PC-9 (cell line): ENCODE measurements at regions of chr12 and their contacts with region 1.

Region 1: GRCh38 chr12:27014085-27014858 is at the start of gene TM7SF3:
- DNase-seq: peak; percentile 83 to 98
- H3K4me3 ChIP-seq: peak within 1 kb of the TSS; percentile 97
- H3K27ac ChIP-seq: peak within 1 kb of the TSS; percentile 48
- H3K4me1 ChIP-seq: peaks cover 35% of the 10 kb centered on the region
- H3K27me3 ChIP-seq: no peaks in the 10 kb centered on the region
- CTCF ChIP-seq: peak; percentile 82
- total RNA-seq, gene TM7SF3: 57.0 and 67.7 TPM in 2 replicates

Region 2: GRCh38 chr12:26113853-26114719 is 900.2 kb before region 1 on chr12:
- CTCF ChIA-PET with region 1: no interaction called
- POLR2A ChIA-PET with region 1: no interaction called
- intact Hi-C with region 1: loop called (anchors 10 kb)
- DNase-seq: peak; percentile 91 to 92
- H3K4me3 ChIP-seq: peak overlapping the region; percentile 57
- H3K27ac ChIP-seq: peak overlapping the region; percentile 93
- H3K4me1 ChIP-seq: peaks cover 61% of the 10 kb centered on the region
- H3K27me3 ChIP-seq: no peaks in the 10 kb centered on the region
- CTCF ChIP-seq: peak; percentile 46

Region 3: GRCh38 chr12:26608706-26609105 is 405.6 kb before region 1 on chr12:
- CTCF ChIA-PET with region 1: no interaction called
- POLR2A ChIA-PET with region 1: no interaction called
- intact Hi-C with region 1: no loop called
- DNase-seq: no peak
- H3K4me3 ChIP-seq: no peak overlapping the region
- H3K27ac ChIP-seq: no peak overlapping the region
- H3K4me1 ChIP-seq: no peaks in the 10 kb centered on the region
- H3K27me3 ChIP-seq: no peaks in the 10 kb centered on the region
- CTCF ChIP-seq: no peak

Region 4: GRCh38 chr12:26701604-26702215 is 312.6 kb before region 1 on chr12:
- CTCF ChIA-PET with region 1: no interaction called
- POLR2A ChIA-PET with region 1: interaction called, 7 read pairs
- intact Hi-C with region 1: loop called (anchors 5 kb)
- DNase-seq: peak in 1 of 2 experiments; percentile 40
- H3K4me3 ChIP-seq: no peak overlapping the region
- H3K27ac ChIP-seq: no peak overlapping the region
- H3K4me1 ChIP-seq: peaks cover 7% of the 10 kb centered on the region; the same call in 1 of the 2 replicates
- H3K27me3 ChIP-seq: no peaks in the 10 kb centered on the region
- CTCF ChIP-seq: peak; percentile 78

Region 5: GRCh38 chr12:26853303-26854030 is 160.8 kb before region 1 on chr12:
- CTCF ChIA-PET with region 1: no interaction called
- POLR2A ChIA-PET with region 1: interaction called, 9 read pairs
- intact Hi-C with region 1: loop called (anchors 1 kb)
- DNase-seq: peak in 1 of 2 experiments; percentile 71
- H3K4me3 ChIP-seq: no peak overlapping the region
- H3K27ac ChIP-seq: no peak overlapping the region
- H3K4me1 ChIP-seq: peaks cover 5% of the 10 kb centered on the region
- H3K27me3 ChIP-seq: no peaks in the 10 kb centered on the region
- CTCF ChIP-seq: peak; percentile 83

Region 6: GRCh38 chr12:26963413-26963812 is 50.9 kb before region 1 on chr12:
- CTCF ChIA-PET with region 1: no interaction called
- POLR2A ChIA-PET with region 1: no interaction called
- intact Hi-C with region 1: no loop called
- DNase-seq: no peak
- H3K4me3 ChIP-seq: no peak overlapping the region
- H3K27ac ChIP-seq: no peak overlapping the region
- H3K4me1 ChIP-seq: no peaks in the 10 kb centered on the region
- H3K27me3 ChIP-seq: no peaks in the 10 kb centered on the region
- CTCF ChIP-seq: no peak

Region 7: DNA sequence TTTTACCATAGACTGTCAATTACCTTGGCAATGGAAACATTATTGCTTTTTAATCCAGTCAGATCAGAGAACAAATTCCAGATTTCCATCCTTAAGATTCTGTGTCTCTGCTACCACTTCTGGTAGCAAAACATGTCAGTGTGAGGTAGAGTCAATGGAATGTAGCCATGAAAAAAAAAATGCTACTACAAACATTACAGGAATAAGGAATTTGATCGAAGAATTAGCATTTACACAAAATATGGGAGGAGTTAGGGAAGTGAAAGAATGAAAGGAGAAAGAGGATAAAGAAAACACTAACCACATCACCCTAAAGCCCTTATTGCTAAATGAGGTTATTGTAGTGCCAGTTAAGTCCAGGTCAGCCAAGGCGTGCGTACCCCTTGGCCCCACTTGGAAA is 17.3 kb after region 1 on chr12:
- CTCF ChIA-PET with region 1: no interaction called
- POLR2A ChIA-PET with region 1: no interaction called
- intact Hi-C with region 1: no loop called
- DNase-seq: no peak
- H3K4me3 ChIP-seq: no peak overlapping the region
- H3K27ac ChIP-seq: no peak overlapping the region
- H3K4me1 ChIP-seq: no peaks in the 10 kb centered on the region
- H3K27me3 ChIP-seq: no peaks in the 10 kb centered on the region
- CTCF ChIP-seq: no peak

Region 8: DNA sequence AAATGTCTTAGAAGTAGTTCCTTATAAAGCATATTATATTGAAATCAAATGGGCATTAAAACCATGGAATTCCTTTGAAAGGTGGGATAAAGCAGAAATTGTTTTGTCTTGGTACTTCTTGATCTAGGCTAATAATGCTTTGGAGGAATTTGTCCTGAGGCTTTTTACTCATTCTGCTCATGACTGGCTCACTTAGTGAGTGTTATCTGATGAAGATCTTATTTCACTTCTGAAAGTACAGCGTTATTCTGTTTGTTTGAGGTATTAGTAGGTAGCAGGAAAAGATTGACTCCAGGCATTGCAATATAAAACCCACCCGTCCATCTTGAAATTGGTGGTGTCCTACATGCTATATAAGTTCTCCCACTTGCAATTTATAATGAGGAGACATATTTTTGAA is 62.7 kb after region 1 on chr12:
- CTCF ChIA-PET with region 1: no interaction called
- POLR2A ChIA-PET with region 1: interaction called, 3 read pairs
- intact Hi-C with region 1: loop called (anchors 2 kb)
- DNase-seq: peak; percentile 12 to 90
- H3K4me3 ChIP-seq: 0 out of 2 replicates have a peak overlapping the region, but pooled peaks have one; percentile 10
- H3K27ac ChIP-seq: peak overlapping the region; percentile 14; the same call in 1 of the 2 replicates
- H3K4me1 ChIP-seq: peaks cover 24% of the 10 kb centered on the region
- H3K27me3 ChIP-seq: no peaks in the 10 kb centered on the region
- CTCF ChIP-seq: no peak

Region 9: GRCh38 chr12:27142101-27142721 is 127.9 kb after region 1 on chr12:
- CTCF ChIA-PET with region 1: no interaction called
- POLR2A ChIA-PET with region 1: no interaction called
- intact Hi-C with region 1: loop called (anchors 1 kb)
- DNase-seq: peak; percentile 44 to 64
- H3K4me3 ChIP-seq: no peak overlapping the region
- H3K27ac ChIP-seq: no peak overlapping the region
- H3K4me1 ChIP-seq: no peaks in the 10 kb centered on the region
- H3K27me3 ChIP-seq: no peaks in the 10 kb centered on the region
- CTCF ChIP-seq: peak; percentile 89

Region 10: GRCh38 chr12:27305673-27306456 is 291.6 kb after region 1 on chr12:
- CTCF ChIA-PET with region 1: interaction called, 19 read pairs
- POLR2A ChIA-PET with region 1: interaction called, 3 read pairs
- intact Hi-C with region 1: loop called (anchors 2 kb)
- DNase-seq: peak in 1 of 2 experiments; percentile 59
- H3K4me3 ChIP-seq: no peak overlapping the region
- H3K27ac ChIP-seq: no peak overlapping the region
- H3K4me1 ChIP-seq: no peaks in the 10 kb centered on the region
- H3K27me3 ChIP-seq: no peaks in the 10 kb centered on the region
- CTCF ChIP-seq: peak; percentile 84